GM10248 (cell line): ENCODE measurements at regions of chr7 and their contacts with region 1.

Region 1: DNA sequence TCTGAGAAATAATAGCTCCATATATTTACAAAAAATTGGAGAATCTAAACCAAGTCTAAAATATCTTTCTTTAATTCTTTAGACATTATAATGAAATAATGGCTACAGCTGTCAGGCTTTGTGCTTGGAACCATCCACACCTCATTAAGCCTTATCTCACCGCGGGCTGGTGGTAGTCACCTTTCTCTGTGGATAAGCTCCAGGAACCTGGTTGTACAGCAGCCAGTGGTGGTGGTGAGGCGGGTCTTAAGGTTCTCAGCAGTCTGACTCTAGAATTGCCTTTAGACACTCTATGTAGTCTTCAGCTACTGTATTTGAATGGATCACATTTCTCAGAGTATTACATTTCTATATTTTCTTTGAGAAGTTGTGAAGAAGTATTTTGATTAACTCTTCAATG is 34.2 kb downstream of the CUL1 start:
- DNase-seq: no peak
- CTCF ChIP-seq: no peak

Region 2: GRCh38 chr7:148687555-148687954 is 45.3 kb before region 1 on chr7:
- CTCF ChIA-PET with region 1: no interaction called
- POLR2A ChIA-PET with region 1: no interaction called
- DNase-seq: no peak
- CTCF ChIP-seq: no peak

Region 3: GRCh38 chr7:148722340-148723165 is 10.3 kb before region 1 on chr7:
- CTCF ChIA-PET with region 1: interaction called, 11 read pairs
- POLR2A ChIA-PET with region 1: no interaction called
- DNase-seq: no peak
- CTCF ChIP-seq: no peak